Heart left ventricle (tissue), 16 donors: ENCODE measurements at regions of chr9 and their contacts with region 1.

Region 1: GRCh38 chr9:75071530-75072124 is 16.3 kb downstream of the NMRK1 start:
- DNase-seq: no peak
- ATAC-seq: no peak
- H3K4me3 ChIP-seq: no peak overlapping the region
- H3K27ac ChIP-seq: no peak overlapping the region
- H3K4me1 ChIP-seq: no peaks in the 10 kb centered on the region
- H3K27me3 ChIP-seq: no peaks in the 10 kb centered on the region
- CTCF ChIP-seq: no peak
- POLR2A ChIP-seq: no peak

Region 2: GRCh38 chr9:74773886-74774479 is 297.6 kb before region 1 on chr9:
- intact Hi-C with region 1: loop called in 5 of 10 experiments (anchors 2 to 5 kb)
- DNase-seq: peak; percentile 48 to 75 (median 69)
- ATAC-seq: peak in 3 of 4 donors; percentile 75 to 83 (median 77)
- H3K4me3 ChIP-seq: no peak overlapping the region
- H3K27ac ChIP-seq: no peak overlapping the region
- H3K4me1 ChIP-seq: peaks cover 0 to 5% (median 0%) of the 10 kb centered on the region in 12 donors
- H3K27me3 ChIP-seq: peaks cover 0 to 5% (median 0%) of the 10 kb centered on the region in 9 donors
- CTCF ChIP-seq: peak; percentile 80 to 95 (median 90)
- POLR2A ChIP-seq: no peak

Region 3: GRCh38 chr9:74935008-74935407 is 136.6 kb before region 1 on chr9:
- intact Hi-C with region 1: loop called in 1 of 10 experiments (anchors 10 kb)
- DNase-seq: no peak
- ATAC-seq: no peak
- H3K4me3 ChIP-seq: no peak overlapping the region
- H3K27ac ChIP-seq: no peak overlapping the region
- H3K4me1 ChIP-seq: no peaks in the 10 kb centered on the region
- H3K27me3 ChIP-seq: no peaks in the 10 kb centered on the region
- CTCF ChIP-seq: no peak
- POLR2A ChIP-seq: no peak

Region 4: DNA sequence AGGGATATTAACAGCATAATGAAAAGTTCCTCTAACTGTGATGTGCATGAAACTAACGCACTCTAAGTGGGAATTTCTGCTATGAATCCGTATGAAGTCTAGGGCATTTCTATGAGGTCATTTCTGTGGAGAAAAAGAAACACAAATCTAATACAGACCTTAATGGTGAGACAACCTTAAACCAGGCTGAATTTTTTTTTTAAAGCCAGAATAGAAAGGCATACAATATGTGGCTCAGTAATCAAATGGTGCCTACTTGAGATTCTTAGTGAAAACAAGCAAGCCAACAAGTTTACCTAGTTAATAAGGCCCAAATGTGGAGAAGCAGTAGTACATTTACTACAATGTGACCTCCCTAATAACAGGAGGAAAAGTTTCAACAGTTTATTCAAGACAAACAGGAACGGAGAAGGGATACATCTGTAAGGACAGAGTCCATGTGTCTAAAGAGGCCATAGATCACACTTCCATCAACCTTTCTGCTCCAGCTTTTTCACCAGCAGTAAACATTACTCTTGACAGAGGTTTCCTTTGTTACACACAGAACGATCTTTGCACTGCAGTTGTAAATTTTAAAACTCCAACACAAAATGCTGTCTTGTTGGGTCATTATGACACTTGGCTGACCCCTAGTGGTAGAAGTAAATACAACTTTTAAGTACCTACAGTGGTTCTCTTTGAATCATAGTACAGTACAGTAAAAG is 69.8 kb before region 1 on chr9:
- intact Hi-C with region 1: loop called in 2 of 10 experiments (anchors 5 to 10 kb)
- DNase-seq: peak in 1 of 5 donors; percentile 13
- ATAC-seq: peak; percentile 51 to 89 (median 77)
- H3K4me3 ChIP-seq: no peak overlapping the region
- H3K27ac ChIP-seq: no peak overlapping the region
- H3K4me1 ChIP-seq: peaks cover 0 to 4% (median 0%) of the 10 kb centered on the region in 12 donors
- H3K27me3 ChIP-seq: no peaks in the 10 kb centered on the region
- CTCF ChIP-seq: peak; percentile 58 to 86 (median 82)
- POLR2A ChIP-seq: no peak

Region 5: GRCh38 chr9:75010570-75010969 is 61.1 kb before region 1 on chr9:
- intact Hi-C with region 1: loop called in 2 of 10 experiments (anchors 10 kb)
- DNase-seq: no peak
- ATAC-seq: no peak
- H3K4me3 ChIP-seq: no peak overlapping the region
- H3K27ac ChIP-seq: no peak overlapping the region
- H3K4me1 ChIP-seq: no peaks in the 10 kb centered on the region
- H3K27me3 ChIP-seq: no peaks in the 10 kb centered on the region
- CTCF ChIP-seq: no peak
- POLR2A ChIP-seq: no peak

Region 6: DNA sequence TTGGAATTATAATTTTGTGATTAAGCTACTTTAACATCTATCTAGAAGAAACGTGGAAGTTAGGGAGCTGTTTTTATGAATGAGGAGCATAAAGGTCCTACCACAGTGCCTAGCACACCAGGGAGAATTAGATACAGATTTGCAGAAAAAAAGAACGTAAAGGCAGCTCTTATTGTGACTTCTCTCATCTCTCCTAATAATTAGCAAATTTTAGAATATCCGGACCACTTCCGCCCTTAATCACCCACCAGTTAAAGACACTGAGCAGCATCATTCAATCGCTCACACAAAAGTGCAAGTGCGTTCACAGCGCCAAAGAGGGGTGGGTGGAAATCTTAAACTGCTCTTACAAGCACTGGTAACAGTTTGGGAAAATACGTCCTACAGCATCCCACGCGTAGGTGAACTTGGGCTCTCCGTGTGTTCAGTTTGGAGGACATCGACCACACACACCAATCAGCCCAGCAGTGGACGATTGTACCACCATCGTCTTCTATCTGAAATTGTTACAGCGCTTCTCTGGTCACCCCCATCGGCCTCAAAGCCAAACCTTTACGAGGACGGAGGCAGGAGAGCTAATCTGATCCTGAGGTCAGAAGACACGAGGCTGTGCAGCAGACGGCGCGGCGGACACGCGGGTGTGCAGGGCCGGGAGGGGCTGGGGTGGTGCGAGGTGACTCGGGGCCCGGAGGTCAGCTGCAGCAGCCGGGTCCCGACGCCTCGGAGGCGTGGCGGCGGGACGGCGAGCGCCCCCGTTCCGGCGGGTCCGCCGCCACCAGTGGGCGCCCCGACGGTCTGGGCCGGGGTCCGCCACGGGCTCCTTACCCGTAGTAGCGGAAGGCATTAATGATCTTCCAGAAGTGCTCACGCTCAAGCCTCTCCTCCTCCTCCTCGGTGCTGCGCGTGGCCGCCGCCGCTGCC is 44.2 kb before region 1 on chr9:
- intact Hi-C with region 1: loop called in 4 of 10 experiments (anchors 2 to 5 kb)
- DNase-seq: peak; percentile 60 to 85 (median 71)
- ATAC-seq: peak; percentile 38 to 80 (median 68)
- H3K4me3 ChIP-seq: peak overlapping the region; percentile 49 to 93 (median 77)
- H3K27ac ChIP-seq: peak overlapping the region; percentile 80 to 98 (median 94)
- H3K4me1 ChIP-seq: peaks cover 0 to 28% (median 13%) of the 10 kb centered on the region in 12 donors
- H3K27me3 ChIP-seq: no peaks in the 10 kb centered on the region
- CTCF ChIP-seq: peak in 2 of 12 donors; percentile 6 to 14
- POLR2A ChIP-seq: no peak

Region 7: GRCh38 chr9:75120686-75121085 is 49.1 kb after region 1 on chr9:
- intact Hi-C with region 1: no loop called
- DNase-seq: no peak
- ATAC-seq: peak in 2 of 4 donors; percentile 28 to 49
- H3K4me3 ChIP-seq: no peak overlapping the region
- H3K27ac ChIP-seq: peak overlapping the region in 1 of 12 donors; percentile 12
- H3K4me1 ChIP-seq: peaks cover 0 to 35% (median 2%) of the 10 kb centered on the region in 12 donors
- H3K27me3 ChIP-seq: no peaks in the 10 kb centered on the region
- CTCF ChIP-seq: no peak
- POLR2A ChIP-seq: no peak

Region 8: GRCh38 chr9:75148561-75148960 is 76.9 kb after region 1 on chr9:
- intact Hi-C with region 1: no loop called
- DNase-seq: no peak
- ATAC-seq: peak in 3 of 4 donors; percentile 49 to 68 (median 62)
- H3K4me3 ChIP-seq: no peak overlapping the region
- H3K27ac ChIP-seq: peak overlapping the region in 5 of 12 donors; percentile 14 to 82 (median 21)
- H3K4me1 ChIP-seq: peaks cover 0 to 70% (median 7%) of the 10 kb centered on the region in 12 donors
- H3K27me3 ChIP-seq: no peaks in the 10 kb centered on the region
- CTCF ChIP-seq: no peak
- POLR2A ChIP-seq: no peak

Region 9: DNA sequence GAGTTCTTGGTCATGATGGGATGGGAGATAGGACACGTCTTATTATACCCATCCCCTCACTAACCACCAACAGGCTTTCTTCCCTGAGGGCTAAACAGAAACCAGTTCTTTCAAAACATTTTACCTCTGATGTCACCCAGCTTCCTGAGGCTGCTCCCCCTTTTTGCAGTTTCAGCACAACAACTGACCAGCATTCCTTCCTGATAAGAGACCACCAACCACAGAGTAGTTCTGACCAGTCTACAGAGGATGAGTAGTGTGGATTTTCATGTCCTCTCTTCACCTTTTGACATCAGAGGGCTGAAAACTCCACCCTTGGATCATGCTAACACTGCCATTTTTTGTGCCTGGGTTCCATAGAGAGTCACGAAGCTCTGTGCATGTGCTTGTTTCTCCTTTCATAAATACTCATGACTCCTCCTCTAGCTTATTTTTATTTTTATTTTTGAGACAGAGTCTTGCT is 99.3 kb after region 1 on chr9:
- intact Hi-C with region 1: no loop called
- DNase-seq: no peak
- ATAC-seq: no peak
- H3K4me3 ChIP-seq: no peak overlapping the region
- H3K27ac ChIP-seq: no peak overlapping the region
- H3K4me1 ChIP-seq: peaks cover 0 to 6% (median 0%) of the 10 kb centered on the region in 12 donors
- H3K27me3 ChIP-seq: no peaks in the 10 kb centered on the region
- CTCF ChIP-seq: no peak
- POLR2A ChIP-seq: no peak